ENCODE measurements at regions of chr1 and their contacts with region 1.

Region 1: DNA sequence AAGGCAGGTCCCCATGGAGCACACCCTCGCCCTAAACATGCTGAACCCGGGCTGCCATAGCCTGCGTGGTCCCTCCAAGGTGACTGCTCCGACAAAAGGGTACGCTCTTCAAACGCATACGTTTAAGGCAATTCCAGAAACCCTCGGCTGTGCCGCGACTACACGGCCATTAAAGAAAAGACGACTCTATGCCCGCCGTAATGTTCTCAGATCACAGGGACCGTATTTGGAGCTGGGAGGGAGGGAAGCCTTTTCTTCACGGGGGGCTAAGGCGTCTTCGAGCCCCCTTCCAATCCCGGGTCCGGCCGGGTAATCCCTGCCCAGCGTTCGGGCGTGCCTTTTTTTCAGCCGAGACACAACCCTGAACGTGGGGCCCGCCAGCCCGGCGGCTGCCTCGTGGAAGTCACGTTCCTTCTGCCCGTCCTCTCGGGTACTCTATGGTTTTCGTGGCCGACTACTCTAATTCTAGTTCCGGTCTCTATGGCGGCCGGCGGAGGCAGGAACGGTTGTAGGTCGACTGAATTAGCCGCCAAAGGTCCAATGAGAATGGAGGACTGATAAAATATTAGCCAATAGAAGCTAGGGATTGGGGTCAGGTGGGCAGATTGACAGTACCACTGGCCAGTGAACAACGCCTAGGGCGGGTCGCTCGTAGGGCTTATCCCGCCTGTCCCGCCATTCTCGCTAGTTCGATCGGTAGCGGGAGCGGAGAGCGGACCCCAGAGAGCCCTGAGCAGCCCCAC is at the start of gene YBX1:
- DNase-seq: peak; percentile 98
- ATAC-seq: peak; percentile 93
- H3K4me3 ChIP-seq: peak within 1 kb of the TSS; percentile 78
- H3K27ac ChIP-seq: peak within 1 kb of the TSS; percentile 88
- H3K4me1 ChIP-seq: peaks cover 7% of the 10 kb centered on the region; the same call in 1 of the 2 replicates
- H3K27me3 ChIP-seq: no peaks in the 10 kb centered on the region
- CTCF ChIP-seq: no peak
- EP300 ChIP-seq: no peak
- POLR2A ChIP-seq: peak; percentile 82
- RAD21 ChIP-seq: no peak
- polyA plus RNA-seq, gene YBX1: 355 to 521 TPM

Region 2: DNA sequence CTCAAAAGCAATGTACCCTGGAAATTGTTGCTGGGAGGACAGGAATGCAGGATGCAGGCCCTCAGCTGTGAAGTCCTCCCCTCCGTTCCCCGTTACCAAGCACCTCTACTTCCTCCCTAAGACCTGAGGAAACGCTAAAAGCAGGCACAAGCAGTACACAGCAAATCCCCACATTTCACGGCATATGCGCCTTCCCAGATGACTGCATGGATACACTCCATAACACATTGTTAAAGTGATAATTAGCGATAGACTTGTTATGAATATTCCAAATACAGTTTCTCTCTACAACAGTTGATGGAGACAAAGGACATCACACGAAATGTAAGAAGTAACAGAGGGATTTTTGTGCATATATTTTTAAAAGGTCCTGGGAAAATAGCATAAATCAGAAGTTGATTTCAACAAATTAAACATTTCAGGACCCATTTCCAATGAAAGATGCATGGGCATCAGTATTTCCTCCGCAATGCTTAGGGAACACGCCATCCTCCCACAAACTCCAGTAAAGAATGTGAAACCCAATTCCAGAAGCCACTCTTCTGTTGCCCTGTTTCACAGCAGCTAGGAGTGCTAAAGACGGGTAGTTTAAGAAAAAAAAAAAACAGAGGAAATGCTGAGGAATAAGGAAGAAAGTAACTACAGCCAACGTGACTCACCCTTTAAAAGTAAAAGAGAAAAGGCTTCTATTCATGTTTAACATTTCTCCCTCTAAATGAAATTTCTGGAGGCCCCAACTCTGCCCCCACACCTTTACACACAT is 838.7 kb before region 1 on chr1:
- CTCF ChIA-PET with region 1: no interaction called
- POLR2A ChIA-PET with region 1: no interaction called
- RAD21 ChIA-PET with region 1: no interaction called
- SMC1A ChIA-PET with region 1: no interaction called
- in situ Hi-C with region 1: no loop called
- intact Hi-C with region 1: no loop called
- DNase-seq: no peak
- ATAC-seq: no peak
- H3K4me3 ChIP-seq: no peak overlapping the region
- H3K27ac ChIP-seq: no peak overlapping the region
- H3K4me1 ChIP-seq: no peaks in the 10 kb centered on the region
- H3K27me3 ChIP-seq: no peaks in the 10 kb centered on the region
- CTCF ChIP-seq: no peak; a peak in 1 of 6 replicates
- EP300 ChIP-seq: no peak
- POLR2A ChIP-seq: no peak
- RAD21 ChIP-seq: no peak

Region 3: DNA sequence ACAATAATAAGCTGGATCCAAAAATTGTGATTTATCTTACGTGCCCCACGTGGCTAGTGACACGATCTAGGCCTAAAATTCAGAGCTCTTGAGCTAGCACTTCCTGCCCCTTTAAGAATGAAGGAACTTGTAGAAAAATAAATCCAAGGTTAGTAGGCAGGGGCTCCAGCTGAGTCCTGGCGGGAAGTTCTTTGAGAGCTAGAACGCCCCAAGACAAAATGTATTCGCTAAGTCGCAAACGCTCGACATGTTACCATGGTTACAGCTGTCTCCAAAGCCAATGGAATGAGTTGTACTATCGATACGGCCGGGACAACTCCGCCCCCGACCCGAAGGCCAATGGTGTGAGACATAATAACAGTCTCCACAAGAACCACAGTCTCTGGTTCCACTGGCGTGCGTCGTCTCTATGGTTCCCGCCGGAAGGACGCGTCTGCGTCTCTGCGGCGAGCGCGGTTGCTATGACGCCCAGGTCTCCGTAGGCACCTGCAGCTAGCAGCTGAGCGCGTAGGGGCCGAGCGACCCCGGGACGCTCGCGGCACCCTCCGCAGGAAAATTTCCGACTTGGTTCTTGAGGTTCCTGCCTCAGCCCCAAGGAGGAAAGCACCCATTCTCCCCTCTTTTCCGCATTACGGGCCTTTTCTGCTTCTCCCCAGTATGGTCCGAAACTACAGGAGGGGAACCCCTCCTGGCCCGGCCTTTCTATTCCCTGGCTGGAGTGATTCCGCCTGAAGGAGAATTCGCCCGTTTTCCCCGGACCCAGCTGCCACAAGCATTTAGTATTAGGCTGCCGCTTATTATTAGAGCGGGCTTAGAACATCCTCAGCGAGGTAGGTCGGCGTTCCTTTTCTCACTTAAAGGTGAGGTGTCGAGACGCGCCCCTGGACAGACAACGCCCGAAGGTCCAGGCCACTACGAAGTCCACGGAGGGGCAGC is 218.8 kb before region 1 on chr1 and contains the start of gene CCDC30:
- CTCF ChIA-PET with region 1: no interaction called
- POLR2A ChIA-PET with region 1: no interaction called
- RAD21 ChIA-PET with region 1: no interaction called
- SMC1A ChIA-PET with region 1: no interaction called
- in situ Hi-C with region 1: no loop called
- intact Hi-C with region 1: loop called (anchors 5 kb)
- DNase-seq: peak; percentile 93
- ATAC-seq: peak; percentile 100
- H3K4me3 ChIP-seq: peak within 1 kb of the TSS; percentile 71
- H3K27ac ChIP-seq: peak within 1 kb of the TSS; percentile 19; the same call in 1 of the 2 replicates
- H3K4me1 ChIP-seq: peaks cover 5% of the 10 kb centered on the region; the same call in 1 of the 2 replicates
- H3K27me3 ChIP-seq: no peaks in the 10 kb centered on the region
- CTCF ChIP-seq: no peak
- EP300 ChIP-seq: no peak
- POLR2A ChIP-seq: peak; percentile 45
- RAD21 ChIP-seq: no peak
- polyA plus RNA-seq, gene CCDC30: 0.64 to 1.3 TPM

Region 4: DNA sequence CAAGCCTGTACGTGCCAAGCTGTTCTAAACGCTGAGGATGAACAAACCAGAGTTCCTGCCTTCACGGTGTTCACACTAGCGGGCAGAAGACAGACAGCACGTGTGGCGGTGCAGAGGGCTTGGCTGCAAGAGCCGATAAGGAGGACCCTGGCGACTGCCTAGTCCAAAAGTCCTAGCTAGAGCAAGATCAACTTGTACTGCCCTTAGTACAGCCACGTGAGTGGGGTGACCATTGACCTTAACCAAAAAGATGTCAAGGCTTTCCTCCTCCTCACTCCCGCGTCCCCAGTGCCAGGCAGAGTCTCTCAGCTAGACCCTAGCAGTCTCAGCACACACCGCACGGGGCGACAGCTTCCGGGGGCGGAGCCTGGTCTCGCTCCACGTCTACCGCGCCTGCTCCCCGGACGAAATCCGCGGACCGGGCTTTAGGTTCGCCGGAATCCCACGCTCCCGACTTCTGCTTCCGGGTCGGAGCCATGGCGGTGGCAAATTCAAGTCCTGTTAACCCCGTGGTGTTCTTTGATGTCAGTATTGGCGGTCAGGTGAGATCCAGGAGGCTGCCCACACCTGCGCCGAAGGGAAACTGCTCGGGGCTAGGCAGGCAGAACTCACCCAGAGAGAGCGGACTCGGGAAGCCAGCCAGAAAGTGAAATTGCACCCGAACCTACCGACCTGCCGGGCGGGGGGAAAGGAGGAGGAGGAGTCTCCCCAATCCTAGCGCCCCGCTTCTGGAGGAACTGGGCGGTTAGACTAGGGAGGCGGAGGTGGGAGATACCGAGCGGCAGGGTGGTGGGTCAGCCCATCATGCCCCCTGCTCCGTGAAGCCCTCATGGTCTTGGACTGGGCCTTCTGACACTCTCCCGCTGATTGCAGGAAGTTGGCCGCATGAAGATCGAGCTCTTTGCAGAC is 23.7 kb before region 1 on chr1 and contains the start of gene PPIH:
- CTCF ChIA-PET with region 1: interaction called, 3 read pairs
- POLR2A ChIA-PET with region 1: interaction called, 24 read pairs
- RAD21 ChIA-PET with region 1: interaction called, 5 read pairs
- SMC1A ChIA-PET with region 1: interaction called, 12 read pairs
- in situ Hi-C with region 1: no loop called
- intact Hi-C with region 1: loop called (anchors 1 kb)
- DNase-seq: peak; percentile 80
- ATAC-seq: peak; percentile 99
- H3K4me3 ChIP-seq: peak within 1 kb of the TSS; percentile 87
- H3K27ac ChIP-seq: peak within 1 kb of the TSS; percentile 63
- H3K4me1 ChIP-seq: 0 out of 2 replicates have a peak, but pooled peaks cover 2% of the 10 kb centered on the region
- H3K27me3 ChIP-seq: no peaks in the 10 kb centered on the region
- CTCF ChIP-seq: peak in 1 of 3 experiments; percentile 28; a peak in 1 of 6 replicates
- EP300 ChIP-seq: 0 out of 4 replicates have a peak, but pooled peaks of 1 of the 2 experiments have one; percentile 20
- POLR2A ChIP-seq: peak; percentile 91
- RAD21 ChIP-seq: no peak
- polyA plus RNA-seq, gene PPIH: 96.3 to 114 TPM

Region 5: DNA sequence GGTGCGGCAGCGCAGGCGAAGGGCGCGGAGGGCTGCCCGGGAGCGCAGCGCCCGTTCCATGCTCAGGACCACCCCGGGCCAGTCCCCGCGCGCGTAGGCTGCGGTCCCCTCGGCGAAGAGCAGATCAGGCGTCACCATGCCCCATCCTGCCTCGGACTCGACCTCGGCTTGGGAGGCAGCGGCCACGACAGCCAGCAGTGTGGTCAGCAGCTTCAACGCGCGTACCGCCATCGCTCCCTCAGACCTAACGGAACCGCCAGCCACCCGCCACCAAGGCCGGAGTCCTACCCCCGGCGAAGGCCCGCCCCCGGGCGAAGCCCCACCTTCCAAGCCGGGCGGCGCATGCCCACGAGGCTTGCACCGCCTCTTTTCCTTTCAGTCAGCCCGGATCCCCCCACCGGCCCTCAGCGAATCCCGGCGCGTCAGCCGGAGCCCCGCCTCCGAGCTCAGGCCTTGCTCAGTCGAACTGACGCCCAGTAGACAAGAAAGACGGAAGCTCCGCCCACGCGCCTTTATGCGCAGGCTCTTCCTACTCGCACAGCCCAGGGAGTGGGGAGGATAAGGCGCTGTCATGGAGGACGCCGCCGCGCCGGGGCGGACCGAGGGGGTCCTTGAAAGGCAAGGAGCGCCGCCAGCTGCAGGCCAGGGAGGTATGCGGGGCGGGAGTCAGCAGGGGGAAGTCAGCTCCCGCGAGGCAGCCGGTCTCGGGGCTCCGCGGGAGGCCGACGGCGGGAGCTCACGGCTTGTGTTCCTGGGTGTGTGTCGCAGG is 85.0 kb after region 1 on chr1 and contains the starts of genes C1orf50 and P3H1:
- CTCF ChIA-PET with region 1: interaction called, 5 read pairs
- POLR2A ChIA-PET with region 1: interaction called, 23 read pairs
- RAD21 ChIA-PET with region 1: interaction called, 15 read pairs
- SMC1A ChIA-PET with region 1: interaction called, 11 read pairs
- in situ Hi-C with region 1: no loop called
- intact Hi-C with region 1: loop called (anchors 5 kb)
- DNase-seq: peak; percentile 93
- ATAC-seq: peak; percentile 93
- H3K4me3 ChIP-seq: peak within 1 kb of the TSS; percentile 95
- H3K27ac ChIP-seq: peak within 1 kb of the TSS; percentile 84
- H3K4me1 ChIP-seq: peaks cover 4% of the 10 kb centered on the region; the same call in 1 of the 2 replicates
- H3K27me3 ChIP-seq: no peaks in the 10 kb centered on the region
- CTCF ChIP-seq: no peak
- EP300 ChIP-seq: no peak
- POLR2A ChIP-seq: peak; percentile 99
- RAD21 ChIP-seq: no peak
- polyA plus RNA-seq, gene C1orf50: 1.2 to 3.3 TPM
- polyA plus RNA-seq, gene P3H1: 0.72 to 3.1 TPM

Region 6: GRCh38 chr1:42801832-42802473 is 120.0 kb after region 1 on chr1:
- CTCF ChIA-PET with region 1: no interaction called
- POLR2A ChIA-PET with region 1: no interaction called
- RAD21 ChIA-PET with region 1: no interaction called
- SMC1A ChIA-PET with region 1: no interaction called
- in situ Hi-C with region 1: no loop called
- intact Hi-C with region 1: no loop called
- DNase-seq: no peak
- ATAC-seq: no peak
- H3K4me3 ChIP-seq: no peak overlapping the region
- H3K27ac ChIP-seq: no peak overlapping the region
- H3K4me1 ChIP-seq: no peaks in the 10 kb centered on the region
- H3K27me3 ChIP-seq: no peaks in the 10 kb centered on the region
- CTCF ChIP-seq: no peak
- EP300 ChIP-seq: no peak
- POLR2A ChIP-seq: no peak
- RAD21 ChIP-seq: no peak

Region 7: GRCh38 chr1:42891465-42892150 is 209.7 kb after region 1 on chr1:
- CTCF ChIA-PET with region 1: no interaction called
- POLR2A ChIA-PET with region 1: no interaction called
- RAD21 ChIA-PET with region 1: no interaction called
- SMC1A ChIA-PET with region 1: no interaction called
- in situ Hi-C with region 1: no loop called
- intact Hi-C with region 1: no loop called
- DNase-seq: no peak
- ATAC-seq: no peak
- H3K4me3 ChIP-seq: no peak overlapping the region
- H3K27ac ChIP-seq: no peak overlapping the region
- H3K4me1 ChIP-seq: no peaks in the 10 kb centered on the region
- H3K27me3 ChIP-seq: no peaks in the 10 kb centered on the region
- CTCF ChIP-seq: no peak
- EP300 ChIP-seq: no peak
- POLR2A ChIP-seq: no peak
- RAD21 ChIP-seq: no peak

Region 8: DNA sequence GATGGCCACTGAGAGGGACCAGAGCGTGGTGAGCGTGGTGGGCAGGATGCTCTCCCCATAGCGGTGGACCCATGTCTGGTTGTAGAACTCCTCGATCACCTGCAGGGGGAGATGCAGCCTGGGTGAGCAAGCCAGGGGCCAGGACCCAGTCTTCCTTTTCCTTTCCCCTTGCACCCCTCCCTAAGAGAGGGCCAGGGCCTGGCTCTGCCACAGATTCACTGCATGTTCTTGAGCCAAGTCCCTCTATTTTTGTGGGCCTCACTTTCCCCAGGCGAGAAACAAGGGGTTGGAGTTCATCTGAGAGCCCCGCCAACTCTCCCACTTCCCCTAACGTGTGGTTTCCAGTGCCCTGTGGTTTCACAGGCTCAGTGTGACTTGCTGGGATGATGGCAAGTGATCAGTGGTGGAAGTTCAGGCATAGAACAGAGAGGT is 249.2 kb after region 1 on chr1:
- CTCF ChIA-PET with region 1: no interaction called
- POLR2A ChIA-PET with region 1: no interaction called
- RAD21 ChIA-PET with region 1: no interaction called
- SMC1A ChIA-PET with region 1: no interaction called
- in situ Hi-C with region 1: no loop called
- intact Hi-C with region 1: loop called (anchors 5 kb)
- DNase-seq: peak; percentile 69
- ATAC-seq: peak; percentile 61
- H3K4me3 ChIP-seq: 0 out of 2 replicates have a peak overlapping the region, but pooled peaks have one; percentile 17
- H3K27ac ChIP-seq: peak overlapping the region; percentile 95
- H3K4me1 ChIP-seq: peaks cover 63% of the 10 kb centered on the region
- H3K27me3 ChIP-seq: no peaks in the 10 kb centered on the region
- CTCF ChIP-seq: peak; percentile 53 to 65 (median 65)
- EP300 ChIP-seq: peak in 1 of 2 experiments; percentile 36; a peak in 1 of 4 replicates
- POLR2A ChIP-seq: no peak
- RAD21 ChIP-seq: peak; percentile 60

Region 9: GRCh38 chr1:42958488-42959319 is 276.8 kb after region 1 on chr1 and contains the start of gene SLC2A1:
- CTCF ChIA-PET with region 1: no interaction called
- POLR2A ChIA-PET with region 1: no interaction called
- RAD21 ChIA-PET with region 1: no interaction called
- SMC1A ChIA-PET with region 1: no interaction called
- in situ Hi-C with region 1: no loop called
- intact Hi-C with region 1: loop called (anchors 5 kb)
- DNase-seq: peak; percentile 79
- ATAC-seq: peak; percentile 88
- H3K4me3 ChIP-seq: peak within 1 kb of the TSS; percentile 88
- H3K27ac ChIP-seq: peak within 1 kb of the TSS; percentile 78
- H3K4me1 ChIP-seq: peaks cover 38% of the 10 kb centered on the region
- H3K27me3 ChIP-seq: no peaks in the 10 kb centered on the region
- CTCF ChIP-seq: no peak; a peak in 1 of 6 replicates
- EP300 ChIP-seq: peak in 1 of 2 experiments; percentile 14; a peak in 1 of 4 replicates
- POLR2A ChIP-seq: peak; percentile 100
- RAD21 ChIP-seq: no peak
- polyA plus RNA-seq, gene SLC2A1: 5.7 to 8.2 TPM

Measured in GM12878 (cell line).